ENCODE measurements at regions of chr1 and their contacts with region 1.

Region 1: DNA sequence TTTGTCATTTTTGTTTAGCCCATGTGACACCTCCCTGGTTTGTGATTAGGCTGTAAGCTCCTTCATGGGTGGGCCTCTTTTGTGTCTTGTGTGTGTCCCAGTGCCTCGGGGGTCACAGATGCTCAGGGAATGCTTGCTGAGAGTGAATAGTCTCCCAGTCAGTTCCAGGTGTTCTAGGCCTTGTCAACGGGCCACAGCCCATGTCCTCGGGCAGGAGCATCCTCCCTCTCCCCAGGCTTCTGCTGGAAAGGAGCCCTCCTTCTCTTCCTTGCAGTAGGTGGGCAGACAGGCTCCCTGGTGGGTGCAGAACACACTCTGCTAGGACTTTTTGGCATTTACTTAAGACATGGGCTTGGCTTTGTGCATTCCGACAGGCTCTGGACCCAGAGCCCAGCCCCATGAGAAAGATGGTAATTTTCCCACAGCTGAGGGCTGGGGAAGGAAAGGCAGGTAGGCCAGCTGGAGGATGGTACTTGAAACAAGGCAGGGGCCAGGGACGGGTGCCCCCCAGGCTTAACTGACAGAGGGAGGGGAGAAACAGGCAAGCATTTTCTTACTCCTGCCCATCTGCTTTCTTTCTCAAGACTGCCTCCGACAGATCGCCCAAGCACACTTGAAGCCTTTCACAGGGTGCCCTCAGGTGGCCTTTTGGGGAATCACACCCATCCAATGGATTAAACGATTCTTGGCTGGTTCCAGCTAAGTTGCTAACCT is 7.1 kb upstream of the CPLANE2 start:
- DNase-seq: peak; percentile 81
- ATAC-seq: peak; percentile 44 to 57

Region 2: DNA sequence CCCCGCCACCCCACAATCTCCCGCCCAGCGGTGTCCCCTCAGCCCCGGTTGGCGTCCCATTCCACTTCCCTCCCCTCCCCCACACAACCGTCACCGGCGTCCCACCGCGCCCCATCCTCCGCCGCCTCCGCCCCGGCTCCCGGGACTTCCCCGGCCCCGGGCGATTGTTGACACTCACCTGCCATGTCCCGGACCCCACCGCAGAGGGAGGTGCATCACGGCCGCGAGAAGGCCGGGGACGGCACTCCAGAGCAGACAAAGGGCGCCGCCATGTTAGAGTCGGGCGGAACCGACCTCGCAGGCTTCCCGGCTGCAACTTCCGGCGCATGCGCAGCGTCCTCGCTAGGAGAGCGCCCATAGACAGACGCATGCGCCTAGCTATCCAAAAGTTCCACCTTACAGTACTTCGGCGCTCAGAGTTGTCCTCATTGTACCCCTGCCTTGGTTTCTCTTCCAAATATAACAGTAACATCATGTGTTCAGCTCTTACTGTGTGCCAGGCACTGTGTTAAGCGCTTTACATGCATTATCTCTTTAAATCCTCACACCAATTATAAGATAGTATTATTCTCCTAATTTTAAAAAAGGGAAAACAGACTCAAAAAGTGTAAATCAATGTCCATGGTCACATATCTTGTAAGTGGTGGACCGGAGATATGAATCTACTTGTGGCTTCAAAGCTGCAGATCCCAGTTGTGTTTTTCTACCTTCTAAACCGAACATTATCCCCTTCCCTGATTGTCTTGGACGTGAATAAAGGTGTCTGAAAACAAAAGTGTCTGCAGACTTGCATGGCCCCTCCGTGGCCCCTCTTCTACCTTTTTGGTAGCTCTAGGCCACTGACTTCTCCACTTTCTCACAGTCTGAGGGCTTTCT is 268.1 kb before region 1 on chr1 and contains the start of gene ZBTB17:
- intact Hi-C with region 1: no loop called
- DNase-seq: peak; percentile 97
- ATAC-seq: peak; percentile 99
- total RNA-seq, gene ZBTB17: 22.4 to 24.6 TPM

Region 3: DNA sequence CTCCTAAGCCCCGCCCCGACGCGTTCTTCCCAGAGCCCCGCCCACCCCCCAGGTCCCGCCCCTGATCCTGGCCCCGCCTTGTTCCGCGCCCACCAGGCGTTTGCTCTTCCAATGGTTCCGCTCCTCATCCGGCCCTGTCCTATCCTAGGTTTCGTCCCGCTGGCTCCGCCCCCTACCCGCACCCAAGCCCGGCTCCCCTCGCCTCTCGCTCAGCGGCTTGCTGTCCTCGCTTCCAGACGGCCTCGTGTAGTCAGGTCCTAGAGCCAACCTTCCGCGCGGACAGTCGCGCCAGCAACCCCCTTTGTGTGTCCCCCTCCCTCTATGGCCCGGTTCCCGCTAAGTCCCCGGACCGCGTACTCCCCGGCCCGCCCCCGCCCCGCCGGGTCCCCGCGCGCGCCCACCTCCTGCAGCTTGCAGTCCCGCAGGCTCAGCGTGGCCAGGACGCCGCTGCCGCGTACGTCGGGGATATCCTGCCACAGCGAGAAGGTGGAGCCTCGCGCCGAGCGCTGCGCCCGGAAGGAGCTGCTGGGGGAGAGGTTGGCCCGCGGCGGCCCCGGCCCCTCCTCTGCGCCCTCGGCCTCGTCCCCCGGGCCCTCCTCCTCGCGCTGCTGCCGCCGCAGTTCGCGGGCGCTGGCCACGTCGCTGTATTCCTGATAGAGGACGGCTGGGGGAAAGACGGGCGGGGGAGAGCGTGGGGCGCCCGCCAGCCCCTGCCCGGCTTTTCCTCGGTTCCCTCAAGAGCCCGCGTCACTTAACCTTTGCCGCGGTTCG is 37.4 kb before region 1 on chr1:
- intact Hi-C with region 1: loop called in 1 of 2 experiments (anchors 5 kb)
- DNase-seq: peak; percentile 98
- ATAC-seq: peak; percentile 95

Region 4: GRCh38 chr1:16324456-16324890 is 80.4 kb after region 1 on chr1:
- intact Hi-C with region 1: no loop called
- DNase-seq: peak; percentile 38
- ATAC-seq: peak; percentile 65 to 91

Region 5: DNA sequence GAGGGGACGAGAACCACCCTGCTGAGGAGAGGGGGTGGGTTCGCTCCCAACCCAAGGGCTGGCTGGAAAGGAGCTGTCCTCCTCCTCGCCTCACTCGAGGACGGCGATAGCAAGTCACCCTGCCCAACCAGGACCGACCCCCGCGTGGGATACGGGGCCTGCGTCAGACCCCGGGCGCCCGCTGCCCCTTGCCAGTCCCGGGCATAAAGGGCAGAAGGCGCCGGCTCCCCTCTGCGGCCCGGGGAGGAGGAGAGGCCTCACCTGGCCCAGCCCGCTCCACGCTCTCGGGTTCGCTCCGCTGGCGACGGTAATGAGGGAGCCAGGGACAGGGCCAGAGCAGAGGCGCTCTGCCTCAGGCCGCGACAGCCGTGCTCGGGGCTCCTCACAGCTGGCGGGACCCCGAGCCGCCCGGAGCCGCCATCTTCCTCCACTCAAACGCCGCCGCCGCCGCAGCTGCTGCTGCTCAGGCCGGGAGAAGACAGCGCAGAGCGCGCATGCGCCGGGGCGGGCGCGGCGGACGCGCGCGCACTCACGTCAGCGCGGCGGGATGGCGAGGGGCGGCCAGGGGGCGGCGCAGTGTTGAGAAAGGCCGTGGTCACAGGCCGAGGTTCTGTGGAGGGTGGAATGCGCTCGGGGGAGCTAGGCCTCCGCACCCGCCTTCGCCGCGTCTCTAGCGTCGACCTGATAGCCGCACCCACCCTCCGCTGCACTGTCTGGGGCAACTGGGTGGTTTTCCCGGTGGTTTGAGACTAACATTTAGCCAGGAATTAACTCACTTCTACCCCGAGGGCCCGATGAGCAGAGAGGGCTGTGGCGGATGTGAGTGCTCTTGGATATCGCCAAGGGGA is 108.1 kb after region 1 on chr1 and contains the start of gene FBXO42:
- intact Hi-C with region 1: loop called in 1 of 2 experiments (anchors 10 kb)
- DNase-seq: peak; percentile 91
- ATAC-seq: peak; percentile 98 to 99
- total RNA-seq, gene FBXO42: 14.1 to 15.1 TPM

Measured in left cardiac atrium (tissue), 4 donors.